ENCODE measurements at regions of chr20 and their contacts with region 1.

Region 1: GRCh38 chr20:63009045-63009961 is 2.5 kb upstream of the BHLHE23 start:
- DNase-seq: peak; percentile 84
- ATAC-seq: peak; percentile 93

Region 2: GRCh38 chr20:62872184-62872847 is 137.0 kb before region 1 on chr20:
- intact Hi-C with region 1: loop called (anchors 2 kb)
- DNase-seq: no peak
- ATAC-seq: no peak

Region 3: DNA sequence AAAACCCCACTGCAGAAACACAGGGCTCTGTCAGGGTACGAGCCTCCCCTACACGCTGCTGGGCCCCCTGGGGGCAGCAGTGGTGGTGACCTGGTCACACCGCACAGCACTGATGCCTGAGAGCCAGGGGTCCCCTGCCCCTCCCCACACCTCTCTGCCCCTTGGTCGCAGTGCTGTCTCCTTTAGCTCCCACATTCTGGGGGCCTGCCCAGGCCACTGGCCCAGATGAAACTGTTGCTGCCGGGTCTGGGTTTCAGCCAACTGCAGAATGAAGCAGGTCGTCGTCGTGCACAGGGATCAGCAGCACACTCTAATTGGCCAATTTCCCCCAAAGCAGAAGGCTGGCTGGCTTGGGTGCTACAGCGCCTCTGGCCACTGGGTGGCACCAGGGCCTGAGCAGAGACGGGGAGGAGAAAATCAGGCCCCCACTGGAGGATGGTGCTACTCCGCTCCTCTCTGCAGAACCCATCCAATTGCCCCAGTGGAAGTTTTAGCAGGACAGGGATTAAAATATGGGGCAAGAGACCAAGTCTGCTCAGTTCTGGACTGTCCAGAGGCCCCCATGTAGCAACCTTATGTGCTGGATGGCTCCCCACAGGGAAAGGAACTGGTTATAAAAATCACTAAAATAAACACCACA is 109.1 kb before region 1 on chr20:
- intact Hi-C with region 1: no loop called
- DNase-seq: peak; percentile 79
- ATAC-seq: peak; percentile 93

Region 4: GRCh38 chr20:62961310-62961783 is 48.0 kb before region 1 on chr20:
- intact Hi-C with region 1: no loop called
- DNase-seq: no peak
- ATAC-seq: no peak

Region 5: GRCh38 chr20:63566395-63567135 is 557.3 kb after region 1 on chr20:
- intact Hi-C with region 1: no loop called
- DNase-seq: no peak
- ATAC-seq: no peak

Region 6: DNA sequence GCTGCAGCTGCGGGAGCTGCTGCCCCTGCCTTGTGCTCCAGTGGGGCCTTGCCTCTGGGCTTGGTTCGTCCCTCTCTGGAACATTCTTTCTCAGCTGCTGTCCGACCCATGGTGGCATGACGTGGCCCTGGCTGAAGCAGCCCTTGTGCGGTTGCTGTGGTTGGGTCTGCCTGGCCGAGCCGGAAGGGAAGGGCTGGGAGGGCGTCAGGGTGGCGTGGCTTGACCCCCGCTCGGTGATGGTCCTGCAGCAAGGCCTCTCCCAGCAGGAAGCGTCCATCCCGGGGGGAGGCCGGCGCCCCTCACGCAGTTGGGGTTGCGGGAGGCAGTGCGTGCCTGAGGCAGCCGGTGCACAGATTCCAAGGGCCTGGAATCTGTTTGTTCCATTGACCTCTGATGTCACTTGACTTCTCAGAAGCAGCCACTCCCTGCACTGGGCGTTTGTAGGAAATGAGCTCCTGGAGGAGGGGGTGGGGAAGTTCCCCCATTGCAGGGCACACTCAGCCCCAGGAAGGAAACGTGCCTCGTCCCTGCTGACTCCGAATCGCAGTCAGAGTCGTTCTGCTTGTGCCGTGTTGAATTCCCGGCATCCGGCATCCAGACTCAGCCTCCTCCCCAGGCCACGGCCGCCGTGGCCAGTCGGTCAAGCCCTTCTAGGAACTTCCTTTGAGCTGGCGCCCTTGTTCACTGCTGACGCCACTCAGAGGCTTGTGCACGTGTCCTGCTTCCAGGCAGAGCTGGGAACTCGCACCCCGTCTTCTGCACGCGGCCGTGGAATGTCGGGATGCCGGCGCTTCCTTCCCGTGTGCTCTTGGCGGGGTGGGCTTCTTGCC is 677.4 kb after region 1 on chr20:
- intact Hi-C with region 1: no loop called
- DNase-seq: peak; percentile 89
- ATAC-seq: peak; percentile 52

Measured in Right ventricle myocardium superior (tissue), 1 donor.